ENCODE measurements at regions of chr17 and their contacts with region 1.

Region 1: DNA sequence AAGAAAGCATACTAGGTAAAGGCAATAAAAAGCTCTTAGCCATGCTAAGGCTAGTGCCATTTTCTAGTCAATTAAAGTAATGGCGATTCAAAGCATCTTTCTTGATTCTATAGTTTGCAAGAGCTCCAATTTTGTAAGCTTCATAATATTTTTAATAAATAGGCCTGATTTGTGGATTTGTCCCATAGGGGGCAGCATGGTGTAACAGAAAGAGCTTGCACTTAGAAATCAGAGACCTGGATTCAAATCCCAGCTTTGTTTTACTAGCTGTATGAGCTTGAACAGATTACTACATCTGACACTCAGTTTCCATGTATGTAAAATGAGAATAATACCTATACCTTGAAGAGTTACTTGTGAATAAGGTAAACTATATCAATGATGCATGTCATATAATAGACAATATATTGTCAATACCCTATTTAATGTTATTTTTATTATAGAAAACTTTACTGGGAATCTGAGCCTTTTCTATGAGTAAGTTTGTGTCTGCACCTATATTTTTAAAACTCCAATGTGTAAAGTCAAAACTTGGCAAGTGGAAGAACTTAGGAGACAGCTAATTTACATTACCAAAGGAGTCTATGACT is 93.6 kb upstream of the NOG start:
- DNase-seq: no peak
- ATAC-seq: peak in 1 of 2 donors; percentile 48
- H3K4me3 ChIP-seq: no peak overlapping the region
- H3K27ac ChIP-seq: no peak overlapping the region
- H3K4me1 ChIP-seq: peaks cover 13 to 17% of the 10 kb centered on the region in 2 donors
- H3K27me3 ChIP-seq: no peaks in the 10 kb centered on the region
- CTCF ChIP-seq: peak; percentile 32 to 63 (median 48)
- POLR2A ChIP-seq: no peak

Region 2: DNA sequence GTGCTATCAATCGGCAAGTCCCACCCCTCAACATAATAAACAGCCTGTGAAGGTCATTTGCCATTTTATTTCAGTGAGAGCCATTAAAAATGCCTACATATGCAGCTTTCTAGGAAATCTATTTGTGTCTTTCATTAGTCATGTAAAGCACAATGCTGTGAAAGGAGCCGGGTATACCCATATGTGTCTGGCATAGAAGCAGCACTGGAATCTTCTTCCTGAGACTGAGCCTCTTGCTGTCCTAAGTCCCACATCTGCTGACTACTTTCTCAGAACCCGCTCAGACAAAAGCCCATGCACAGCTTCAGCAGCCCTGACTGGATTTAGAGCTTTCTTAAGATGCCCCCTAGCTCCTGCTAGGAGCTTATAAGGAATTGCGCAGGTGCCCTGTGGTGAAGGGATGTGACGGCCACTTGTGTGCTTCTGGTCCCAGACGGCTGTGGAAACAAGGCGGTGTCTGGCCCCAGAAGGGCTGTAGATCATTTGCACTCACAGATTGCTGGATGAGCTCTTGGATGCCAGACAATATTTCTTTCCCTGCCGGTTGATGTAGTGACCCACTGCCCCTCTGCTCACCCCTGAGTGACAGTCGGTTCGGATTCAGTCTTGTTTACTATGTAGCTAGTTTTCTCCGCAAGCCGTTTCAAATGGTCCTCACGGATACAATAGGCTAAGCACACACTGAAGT is 174.4 kb before region 1 on chr17:
- in situ Hi-C with region 1: no loop called
- intact Hi-C with region 1: no loop called
- DNase-seq: no peak
- ATAC-seq: no peak
- H3K4me3 ChIP-seq: no peak overlapping the region
- H3K27ac ChIP-seq: no peak overlapping the region
- H3K4me1 ChIP-seq: no peaks in the 10 kb centered on the region
- H3K27me3 ChIP-seq: peaks cover 0 to 6% (median 3%) of the 10 kb centered on the region in 3 donors
- CTCF ChIP-seq: no peak
- POLR2A ChIP-seq: no peak

Region 3: DNA sequence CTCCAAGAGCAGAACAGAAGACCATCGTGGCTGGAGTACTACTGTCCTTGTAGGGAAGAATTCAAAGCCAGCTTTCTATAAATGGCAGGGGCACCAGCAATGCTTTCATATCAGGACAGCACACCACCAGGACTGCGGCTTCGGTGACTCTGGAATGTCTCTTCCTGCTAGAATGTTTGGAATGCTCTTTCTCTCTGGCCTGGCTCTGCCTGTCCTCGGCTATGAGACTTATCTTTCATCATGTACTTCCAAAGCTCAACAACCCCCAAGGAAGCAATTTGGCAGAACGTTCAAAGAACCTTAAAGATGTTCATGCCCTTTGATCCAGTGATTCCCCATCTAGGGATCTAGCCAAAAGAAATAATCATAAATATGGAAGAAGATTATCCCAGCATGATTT is 40.9 kb after region 1 on chr17:
- in situ Hi-C with region 1: no loop called
- intact Hi-C with region 1: no loop called
- DNase-seq: no peak
- ATAC-seq: no peak
- H3K4me3 ChIP-seq: no peak overlapping the region
- H3K27ac ChIP-seq: no peak overlapping the region
- H3K4me1 ChIP-seq: peaks cover 0 to 5% of the 10 kb centered on the region in 2 donors
- H3K27me3 ChIP-seq: no peaks in the 10 kb centered on the region
- CTCF ChIP-seq: no peak
- POLR2A ChIP-seq: no peak

Region 4: GRCh38 chr17:56570199-56570598 is 70.3 kb after region 1 on chr17:
- in situ Hi-C with region 1: loop called in 1 of 4 experiments (anchors 10 kb)
- intact Hi-C with region 1: no loop called
- DNase-seq: no peak
- ATAC-seq: no peak
- H3K4me3 ChIP-seq: no peak overlapping the region
- H3K27ac ChIP-seq: no peak overlapping the region
- H3K4me1 ChIP-seq: no peaks in the 10 kb centered on the region
- H3K27me3 ChIP-seq: no peaks in the 10 kb centered on the region
- CTCF ChIP-seq: no peak
- POLR2A ChIP-seq: no peak

Region 5: GRCh38 chr17:56679115-56679766 is 179.3 kb after region 1 on chr17:
- in situ Hi-C with region 1: no loop called
- intact Hi-C with region 1: loop called (anchors 5 kb)
- DNase-seq: no peak
- ATAC-seq: peak; percentile 38 to 63
- H3K4me3 ChIP-seq: peak overlapping the region; percentile 27 to 56 (median 38)
- H3K27ac ChIP-seq: no peak overlapping the region
- H3K4me1 ChIP-seq: peaks cover 4 to 10% of the 10 kb centered on the region in 2 donors
- H3K27me3 ChIP-seq: peaks cover 0 to 4% (median 0%) of the 10 kb centered on the region in 3 donors
- CTCF ChIP-seq: peak; percentile 24 to 67 (median 40)
- POLR2A ChIP-seq: no peak

Region 6: DNA sequence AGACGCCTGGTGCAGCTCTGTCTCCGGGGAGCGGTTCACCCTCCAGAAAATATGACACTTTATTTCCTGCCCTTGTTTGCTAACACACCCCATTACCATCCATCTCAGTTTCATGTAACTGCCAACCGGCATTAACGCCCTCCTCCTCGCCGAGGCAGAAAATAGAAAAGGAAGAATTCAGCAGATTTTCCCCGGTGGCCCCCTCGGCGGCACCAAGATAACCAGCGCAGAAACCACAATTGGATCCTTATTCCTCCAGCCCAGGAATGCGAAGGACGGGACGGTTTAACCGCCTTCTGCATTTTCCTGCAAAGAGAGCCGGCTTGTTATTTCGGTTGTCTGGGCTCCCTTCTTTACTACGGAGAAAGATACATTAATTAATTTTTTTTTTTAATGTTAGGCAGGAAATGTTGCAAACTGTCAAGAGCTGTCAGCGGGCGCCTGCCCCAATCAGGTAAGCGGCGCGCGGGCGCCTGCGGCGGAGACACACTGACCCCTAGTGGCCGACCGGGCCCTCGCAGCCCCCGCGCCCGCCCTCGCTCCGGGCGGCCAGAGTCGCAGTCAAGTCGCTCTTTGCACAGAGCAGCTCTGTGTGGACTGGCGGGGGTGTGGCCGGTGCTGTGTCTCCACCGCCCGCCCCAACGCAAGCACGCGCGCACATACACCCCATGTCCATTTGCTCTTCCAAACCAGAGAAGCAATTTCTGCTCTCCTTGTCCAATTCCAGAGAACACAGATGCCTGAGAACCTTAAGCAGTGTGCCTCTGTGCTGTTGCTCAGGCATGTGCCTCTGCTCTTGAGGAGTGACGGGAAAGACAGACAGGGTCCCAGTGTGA is 280.2 kb after region 1 on chr17:
- in situ Hi-C with region 1: no loop called
- intact Hi-C with region 1: loop called (anchors 2 kb)
- DNase-seq: peak; percentile 58 to 64
- ATAC-seq: peak; percentile 59 to 80
- H3K4me3 ChIP-seq: peak overlapping the region; percentile 39 to 61 (median 46)
- H3K27ac ChIP-seq: peak overlapping the region in 2 of 4 donors; percentile 36 to 78
- H3K4me1 ChIP-seq: peaks cover 21 to 46% of the 10 kb centered on the region in 2 donors
- H3K27me3 ChIP-seq: no peaks in the 10 kb centered on the region
- CTCF ChIP-seq: peak; percentile 82 to 99 (median 95)
- POLR2A ChIP-seq: no peak

Measured in gastrocnemius medialis (tissue), 4 donors.